OCI-LY7 (cell line): ENCODE measurements at regions of chr12 and their contacts with region 1.

Region 1: GRCh38 chr12:31728917-31729640 is at the start of gene AMN1:
- DNase-seq: peak; percentile 100
- H3K4me3 ChIP-seq: peak within 1 kb of the TSS; percentile 76
- H3K27ac ChIP-seq: peak within 1 kb of the TSS; percentile 81
- H3K4me1 ChIP-seq: peaks cover 61% of the 10 kb centered on the region
- CTCF ChIP-seq: no peak
- total RNA-seq, gene AMN1: 14.1 and 20.1 TPM in 2 replicates

Region 2: GRCh38 chr12:31659087-31659933 is 69.8 kb before region 1 on chr12 and contains the start of gene ETFBKMT:
- CTCF ChIA-PET with region 1: no interaction called
- POLR2A ChIA-PET with region 1: no interaction called
- intact Hi-C with region 1: loop called (anchors 1 kb)
- DNase-seq: peak; percentile 99
- H3K4me3 ChIP-seq: peak within 1 kb of the TSS; percentile 86
- H3K27ac ChIP-seq: peak within 1 kb of the TSS; percentile 86
- H3K4me1 ChIP-seq: peaks cover 20% of the 10 kb centered on the region
- CTCF ChIP-seq: peak; percentile 65
- total RNA-seq, gene ETFBKMT: 0.54 and 0.92 TPM in 2 replicates

Region 3: GRCh38 chr12:31715283-31715825 is 13.7 kb before region 1 on chr12:
- CTCF ChIA-PET with region 1: no interaction called
- POLR2A ChIA-PET with region 1: interaction called, 59 read pairs
- intact Hi-C with region 1: no loop called
- DNase-seq: peak; percentile 88
- H3K4me3 ChIP-seq: peak overlapping the region; percentile 50
- H3K27ac ChIP-seq: peak overlapping the region; percentile 80
- H3K4me1 ChIP-seq: peaks cover 20% of the 10 kb centered on the region
- CTCF ChIP-seq: no peak

Region 4: DNA sequence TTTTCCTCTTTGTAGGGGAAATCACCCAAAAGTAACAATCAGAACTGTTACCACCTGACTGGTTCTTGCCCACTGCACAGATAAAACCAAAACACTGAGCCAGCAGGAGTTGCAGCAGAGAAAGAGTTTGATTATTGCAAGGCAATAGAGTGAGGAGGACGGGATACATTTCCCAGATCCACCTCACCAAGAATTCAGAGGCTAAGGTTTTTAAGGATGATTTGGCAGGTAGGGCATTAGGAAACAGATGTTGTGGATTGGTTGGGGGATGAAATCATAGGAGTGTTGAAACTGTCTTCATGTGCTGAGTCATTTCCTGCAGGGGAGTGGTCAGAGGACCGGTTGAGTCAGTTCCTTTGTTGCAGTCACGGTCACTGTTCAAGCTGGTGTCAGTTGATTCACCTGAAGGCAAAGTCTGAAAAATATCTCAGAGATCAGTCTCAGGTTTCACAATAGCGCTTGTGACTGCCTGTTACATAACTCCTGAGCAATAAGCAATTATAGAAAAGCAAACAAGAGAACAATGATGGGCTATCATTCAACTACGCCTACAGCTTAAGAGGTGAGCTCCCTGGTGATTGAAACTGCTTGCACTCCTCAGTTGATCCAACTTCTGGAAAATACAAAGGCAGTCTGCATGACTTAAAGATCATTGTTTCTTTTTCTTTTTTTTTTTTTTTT is 20.1 kb after region 1 on chr12:
- CTCF ChIA-PET with region 1: interaction called, 3 read pairs
- POLR2A ChIA-PET with region 1: interaction called, 47 read pairs
- intact Hi-C with region 1: loop called (anchors 2 kb)
- DNase-seq: peak; percentile 79
- H3K4me3 ChIP-seq: peak overlapping the region; percentile 2
- H3K27ac ChIP-seq: peak overlapping the region; percentile 74
- H3K4me1 ChIP-seq: peaks cover 83% of the 10 kb centered on the region
- CTCF ChIP-seq: no peak

Region 5: DNA sequence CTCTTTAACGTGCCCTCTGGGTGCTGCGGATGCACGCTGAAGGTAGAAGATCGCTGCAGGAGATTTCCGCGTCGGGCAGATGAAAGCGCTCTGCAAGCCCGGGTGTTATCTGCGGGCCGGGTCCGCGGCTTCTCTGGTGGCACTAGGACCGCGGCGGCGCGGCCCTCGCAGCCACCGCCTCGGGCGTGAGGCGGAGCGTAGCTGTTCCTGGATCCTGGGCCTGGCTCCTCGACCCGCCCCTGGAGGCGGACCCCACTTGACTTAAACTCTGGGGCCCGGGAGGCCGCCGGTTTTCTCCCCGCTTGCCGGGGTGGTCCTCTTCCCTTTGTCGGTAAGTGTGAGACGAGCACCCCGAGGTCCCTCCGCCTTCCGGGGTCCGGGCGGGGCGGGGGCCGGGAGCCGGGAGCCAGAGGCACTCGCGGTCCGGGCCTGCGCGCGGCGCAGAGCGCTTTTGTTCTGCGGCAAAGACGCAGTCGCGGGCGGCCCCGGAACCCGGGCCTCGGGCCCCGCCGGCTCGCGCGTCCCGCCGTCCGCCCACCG is 230.2 kb after region 1 on chr12 and contains the start of gene RESF1:
- CTCF ChIA-PET with region 1: no interaction called
- POLR2A ChIA-PET with region 1: interaction called, 5 read pairs
- intact Hi-C with region 1: loop called (anchors 2 kb)
- DNase-seq: peak; percentile 97
- H3K4me3 ChIP-seq: peak within 1 kb of the TSS; percentile 78
- H3K27ac ChIP-seq: peak within 1 kb of the TSS; percentile 87
- H3K4me1 ChIP-seq: peaks cover 28% of the 10 kb centered on the region
- CTCF ChIP-seq: no peak
- total RNA-seq, gene RESF1: 53.3 and 70.4 TPM in 2 replicates